Endothelial cell of umbilical vein (primary cell): ENCODE measurements at regions of chr16 and their contacts with region 1.

Region 1: DNA sequence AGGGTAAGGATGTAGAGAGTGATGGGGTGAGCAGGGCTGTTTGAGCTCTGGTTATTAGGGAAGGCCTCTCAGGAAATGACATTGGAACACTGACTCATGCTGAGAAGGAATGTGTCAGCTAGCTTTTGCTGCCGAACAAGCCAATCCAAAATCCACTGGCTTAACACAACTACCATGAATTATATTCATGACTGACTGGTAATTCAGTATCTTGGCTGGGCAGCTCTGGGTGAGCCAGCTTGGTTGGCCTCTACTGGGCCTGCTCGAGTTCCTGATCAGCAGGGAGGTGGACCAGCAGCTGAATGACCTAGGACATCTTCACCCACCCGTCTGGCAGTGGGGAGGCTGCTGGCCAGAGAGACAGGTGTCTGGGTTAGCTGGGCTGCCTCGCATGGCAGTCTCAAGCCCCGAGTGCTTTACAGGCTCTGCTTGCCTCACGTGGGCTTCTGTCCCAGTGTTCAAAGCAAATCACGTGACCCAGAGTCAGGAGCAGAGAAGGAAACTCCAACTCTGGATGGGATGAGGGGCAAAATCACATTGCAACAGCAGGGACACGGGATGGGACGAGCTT is 209.4 kb downstream of the KATNIP start:
- DNase-seq: peak; percentile 58
- H3K4me3 ChIP-seq: no peak overlapping the region
- H3K27ac ChIP-seq: peak overlapping the region; percentile 62
- H3K4me1 ChIP-seq: peaks cover 11% of the 10 kb centered on the region
- H3K27me3 ChIP-seq: no peaks in the 10 kb centered on the region
- CTCF ChIP-seq: no peak
- POLR2A ChIP-seq: no peak

Region 2: GRCh38 chr16:27703545-27703944 is 55.8 kb before region 1 on chr16:
- CTCF ChIA-PET with region 1: interaction called, 9 read pairs
- POLR2A ChIA-PET with region 1: no interaction called
- dilution Hi-C with region 1: no loop called
- intact Hi-C with region 1: loop called (anchors 5 kb)
- DNase-seq: peak; percentile 84
- H3K4me3 ChIP-seq: peak overlapping the region in 1 of 3 experiments; percentile 33
- H3K27ac ChIP-seq: peak overlapping the region; percentile 98
- H3K4me1 ChIP-seq: peaks cover 31% of the 10 kb centered on the region
- H3K27me3 ChIP-seq: no peaks in the 10 kb centered on the region
- CTCF ChIP-seq: no peak
- POLR2A ChIP-seq: no peak

Region 3: GRCh38 chr16:27728691-27729090 is 30.7 kb before region 1 on chr16:
- CTCF ChIA-PET with region 1: no interaction called
- POLR2A ChIA-PET with region 1: no interaction called
- dilution Hi-C with region 1: no loop called
- intact Hi-C with region 1: no loop called
- DNase-seq: no peak
- H3K4me3 ChIP-seq: no peak overlapping the region
- H3K27ac ChIP-seq: no peak overlapping the region
- H3K4me1 ChIP-seq: peaks cover 2% of the 10 kb centered on the region
- H3K27me3 ChIP-seq: no peaks in the 10 kb centered on the region
- CTCF ChIP-seq: no peak
- POLR2A ChIP-seq: no peak

Region 4: DNA sequence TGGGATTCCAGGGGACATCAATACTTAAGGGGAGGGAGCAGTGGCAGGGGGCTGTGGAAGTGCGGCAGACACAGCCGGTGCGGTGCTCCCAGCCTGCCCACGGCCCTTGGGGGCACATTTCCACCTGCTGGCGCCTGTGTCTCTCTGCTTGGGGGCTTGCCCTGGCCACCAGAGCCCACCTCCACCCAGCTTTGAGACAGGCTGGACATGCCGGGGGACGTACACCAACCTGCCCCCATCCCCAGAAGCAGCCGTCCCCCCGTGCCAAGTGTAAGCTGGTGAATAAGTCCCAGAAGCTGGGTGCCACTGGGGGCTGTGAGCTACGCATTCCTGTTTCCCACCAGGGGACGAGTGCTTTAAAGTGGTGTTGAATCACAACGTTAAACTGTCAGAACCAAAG is 131.5 kb after region 1 on chr16:
- CTCF ChIA-PET with region 1: no interaction called
- POLR2A ChIA-PET with region 1: no interaction called
- dilution Hi-C with region 1: no loop called
- intact Hi-C with region 1: no loop called
- DNase-seq: no peak
- H3K4me3 ChIP-seq: no peak overlapping the region
- H3K27ac ChIP-seq: no peak overlapping the region
- H3K4me1 ChIP-seq: no peaks in the 10 kb centered on the region
- H3K27me3 ChIP-seq: peaks cover 4 to 8% of the 10 kb centered on the region in 2 experiments
- CTCF ChIP-seq: no peak
- POLR2A ChIP-seq: no peak